Activated T-helper 1 cell treated with anti-CD3 and anti-CD28 coated beads, Interleukin-12 subunit alpha, Interleukin-12 subunit beta, Interleukin-2, Interleukin-4 antibody, amounts not matched to agents 30 ng/mL and 10 ng/mL and 1 ng/mL, durations not matched to agents 14 hours and 24 hours and 36 hours (primary cell): ENCODE measurements at regions of chr6 and their contacts with region 1.

Region 1: GRCh38 chr6:52990342-52990741 is 4.7 kb downstream of the GSTA4 start:
- DNase-seq: no peak
- H3K4me3 Mint-ChIP-seq: peak overlapping the region; percentile 40
- H3K27ac Mint-ChIP-seq: peak overlapping the region; percentile 95
- H3K4me1 Mint-ChIP-seq: peaks cover 68% of the 10 kb centered on the region
- H3K27me3 Mint-ChIP-seq: peaks cover 6% of the 10 kb centered on the region

Region 2: GRCh38 chr6:52929321-52930164 is 60.8 kb before region 1 on chr6:
- intact Hi-C with region 1: no loop called
- DNase-seq: no peak
- H3K4me3 Mint-ChIP-seq: no peak overlapping the region
- H3K27ac Mint-ChIP-seq: no peak overlapping the region
- H3K4me1 Mint-ChIP-seq: no peaks in the 10 kb centered on the region
- H3K27me3 Mint-ChIP-seq: peaks cover 10% of the 10 kb centered on the region

Region 3: DNA sequence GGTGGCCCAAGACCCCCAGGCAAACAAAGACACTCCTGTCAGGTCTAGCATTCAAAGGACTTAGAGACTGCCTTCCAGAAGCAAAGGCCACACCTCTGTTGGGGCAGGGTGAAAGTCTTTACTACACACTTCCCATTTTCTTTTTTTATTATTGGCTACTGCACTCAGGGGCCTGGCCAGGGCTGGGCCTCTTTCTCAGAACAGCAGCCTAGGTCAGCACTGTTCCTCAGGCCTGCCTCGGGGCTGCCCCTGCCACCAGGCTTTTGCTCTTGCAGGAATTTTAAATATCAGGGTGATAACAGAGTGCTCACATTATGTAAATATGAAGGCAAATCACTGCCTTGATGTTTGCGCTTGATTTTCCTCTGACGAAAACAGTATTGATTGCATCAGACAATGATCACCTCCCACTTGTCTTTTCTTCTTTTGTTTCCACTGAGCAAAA is 13.7 kb before region 1 on chr6:
- intact Hi-C with region 1: loop called (anchors 1 kb)
- DNase-seq: no peak
- H3K4me3 Mint-ChIP-seq: peak overlapping the region; percentile 34
- H3K27ac Mint-ChIP-seq: peak overlapping the region; percentile 92
- H3K4me1 Mint-ChIP-seq: peaks cover 54% of the 10 kb centered on the region
- H3K27me3 Mint-ChIP-seq: peaks cover 2% of the 10 kb centered on the region

Region 4: DNA sequence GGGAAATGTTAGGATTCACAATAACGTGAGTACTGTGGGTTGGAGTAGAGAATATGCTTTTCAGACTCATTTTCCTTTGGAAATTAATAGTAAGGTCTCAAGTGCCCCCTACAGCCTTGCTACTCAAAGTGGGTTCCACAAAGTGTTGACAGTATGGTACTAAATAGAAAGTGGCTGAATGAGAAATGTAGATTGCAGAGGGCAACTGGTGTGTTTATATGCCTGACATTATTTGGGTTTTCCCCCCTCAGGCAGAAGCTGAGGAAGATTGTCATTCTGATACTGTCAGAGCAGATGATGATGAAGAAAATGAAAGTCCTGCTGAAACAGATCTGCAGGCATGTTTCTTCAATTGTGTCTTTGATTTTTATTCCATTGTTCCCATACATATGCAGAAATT is 80.5 kb after region 1 on chr6:
- intact Hi-C with region 1: no loop called
- DNase-seq: no peak
- H3K4me3 Mint-ChIP-seq: peak overlapping the region; percentile 27
- H3K27ac Mint-ChIP-seq: peak overlapping the region; percentile 57
- H3K4me1 Mint-ChIP-seq: peaks cover 26% of the 10 kb centered on the region
- H3K27me3 Mint-ChIP-seq: no peaks in the 10 kb centered on the region

Region 5: GRCh38 chr6:53492860-53493634 is 502.7 kb after region 1 on chr6:
- intact Hi-C with region 1: loop called (anchors 2 kb)
- DNase-seq: no peak
- H3K4me3 Mint-ChIP-seq: no peak overlapping the region
- H3K27ac Mint-ChIP-seq: peak overlapping the region; percentile 25
- H3K4me1 Mint-ChIP-seq: peaks cover 15% of the 10 kb centered on the region
- H3K27me3 Mint-ChIP-seq: peaks cover 22% of the 10 kb centered on the region